Endothelial cell of umbilical vein (primary cell): ENCODE measurements at regions of chr17 and their contacts with region 1.

Region 1: DNA sequence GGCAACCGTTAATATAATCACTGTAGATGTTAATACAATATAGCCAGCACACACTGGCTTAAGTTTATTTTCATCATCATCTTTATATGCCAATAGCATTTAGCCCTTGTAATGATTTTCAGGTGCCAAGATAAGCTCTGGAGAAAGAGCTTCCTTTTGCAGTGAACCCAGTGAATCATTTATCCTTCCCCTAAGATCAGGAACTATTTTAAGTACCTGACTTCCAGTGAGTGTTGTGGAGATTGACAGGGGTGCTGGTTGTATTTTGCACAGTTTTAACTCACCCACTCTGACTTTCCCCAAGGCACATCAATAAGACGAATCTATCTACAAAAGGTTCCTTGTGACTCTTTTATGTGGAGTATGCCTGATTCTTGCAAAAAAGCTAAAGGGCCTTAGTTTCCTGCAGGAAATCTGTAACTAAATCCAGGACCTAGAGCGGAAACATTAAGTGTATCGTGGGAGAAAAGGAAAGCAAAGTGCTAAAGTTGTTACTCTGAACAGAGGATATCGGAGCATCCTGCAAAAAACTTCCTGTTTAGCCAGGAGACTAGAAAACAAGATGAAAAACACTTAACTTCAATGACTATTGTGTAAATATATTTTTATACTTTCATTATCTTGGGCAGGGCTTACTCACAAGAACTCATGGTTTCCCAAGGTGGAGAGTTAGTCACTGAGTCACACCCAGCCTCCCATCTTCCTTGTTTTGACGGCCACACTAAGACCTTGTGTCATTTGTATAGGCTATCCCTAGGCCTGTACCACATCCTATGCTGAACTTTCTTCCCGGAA is 183.6 kb downstream of the MAP2K6 start:
- DNase-seq: peak; percentile 82
- H3K4me3 ChIP-seq: peak overlapping the region in 1 of 3 experiments; percentile 13
- H3K27ac ChIP-seq: peak overlapping the region; percentile 50
- H3K4me1 ChIP-seq: peaks cover 37% of the 10 kb centered on the region
- H3K27me3 ChIP-seq: no peaks in the 10 kb centered on the region
- CTCF ChIP-seq: no peak
- POLR2A ChIP-seq: no peak

Region 2: GRCh38 chr17:70158180-70158579 is 560.1 kb after region 1 on chr17:
- CTCF ChIA-PET with region 1: no interaction called
- POLR2A ChIA-PET with region 1: no interaction called
- dilution Hi-C with region 1: no loop called
- intact Hi-C with region 1: loop called (anchors 2 kb)
- DNase-seq: peak; percentile 97
- H3K4me3 ChIP-seq: peak overlapping the region; percentile 27 to 77 (median 47)
- H3K27ac ChIP-seq: peak overlapping the region; percentile 100
- H3K4me1 ChIP-seq: peaks cover 44% of the 10 kb centered on the region
- H3K27me3 ChIP-seq: no peaks in the 10 kb centered on the region
- CTCF ChIP-seq: no peak
- POLR2A ChIP-seq: no peak